Right ventricle myocardium inferior (tissue), 1 donor: ENCODE measurements at regions of chr12 and their contacts with region 1.

Region 1: DNA sequence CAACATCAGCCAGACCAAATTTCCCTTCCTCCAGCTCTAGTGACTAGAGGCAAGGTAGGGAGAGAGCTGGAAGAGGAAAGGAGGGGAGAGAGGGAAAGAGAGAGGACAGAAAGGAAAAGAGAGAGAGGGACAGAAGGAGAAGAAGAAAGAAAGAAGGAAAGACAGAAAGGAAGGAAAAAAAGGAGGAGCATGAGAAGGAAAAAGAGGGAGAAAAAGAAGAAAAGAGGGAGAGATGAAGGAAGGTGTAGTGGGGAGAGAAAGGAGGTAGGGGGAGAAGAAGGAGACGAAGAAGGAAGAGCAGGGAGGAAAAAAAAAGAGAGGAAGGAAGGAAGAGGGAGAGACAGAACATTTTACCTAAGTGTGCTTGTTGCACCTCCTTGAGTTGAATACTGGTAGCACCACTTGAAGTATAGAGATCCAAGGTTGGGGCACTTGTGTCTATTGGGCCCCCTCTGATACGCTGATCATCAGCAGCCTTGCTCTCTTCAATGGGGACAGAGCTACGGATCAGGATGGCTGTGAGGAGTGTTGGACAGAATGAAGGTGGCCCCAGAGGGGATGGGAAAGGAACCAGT is 232.5 kb downstream of the SUDS3 start:
- DNase-seq: no peak
- ATAC-seq: no peak

Region 2: GRCh38 chr12:118446244-118446643 is 162.6 kb before region 1 on chr12:
- intact Hi-C with region 1: loop called (anchors 2 kb)
- DNase-seq: no peak
- ATAC-seq: no peak

Region 3: GRCh38 chr12:118513611-118514010 is 95.2 kb before region 1 on chr12:
- intact Hi-C with region 1: no loop called
- DNase-seq: no peak
- ATAC-seq: no peak